PC-9 (cell line): ENCODE measurements at regions of chr19 and their contacts with region 1.

Region 1: DNA sequence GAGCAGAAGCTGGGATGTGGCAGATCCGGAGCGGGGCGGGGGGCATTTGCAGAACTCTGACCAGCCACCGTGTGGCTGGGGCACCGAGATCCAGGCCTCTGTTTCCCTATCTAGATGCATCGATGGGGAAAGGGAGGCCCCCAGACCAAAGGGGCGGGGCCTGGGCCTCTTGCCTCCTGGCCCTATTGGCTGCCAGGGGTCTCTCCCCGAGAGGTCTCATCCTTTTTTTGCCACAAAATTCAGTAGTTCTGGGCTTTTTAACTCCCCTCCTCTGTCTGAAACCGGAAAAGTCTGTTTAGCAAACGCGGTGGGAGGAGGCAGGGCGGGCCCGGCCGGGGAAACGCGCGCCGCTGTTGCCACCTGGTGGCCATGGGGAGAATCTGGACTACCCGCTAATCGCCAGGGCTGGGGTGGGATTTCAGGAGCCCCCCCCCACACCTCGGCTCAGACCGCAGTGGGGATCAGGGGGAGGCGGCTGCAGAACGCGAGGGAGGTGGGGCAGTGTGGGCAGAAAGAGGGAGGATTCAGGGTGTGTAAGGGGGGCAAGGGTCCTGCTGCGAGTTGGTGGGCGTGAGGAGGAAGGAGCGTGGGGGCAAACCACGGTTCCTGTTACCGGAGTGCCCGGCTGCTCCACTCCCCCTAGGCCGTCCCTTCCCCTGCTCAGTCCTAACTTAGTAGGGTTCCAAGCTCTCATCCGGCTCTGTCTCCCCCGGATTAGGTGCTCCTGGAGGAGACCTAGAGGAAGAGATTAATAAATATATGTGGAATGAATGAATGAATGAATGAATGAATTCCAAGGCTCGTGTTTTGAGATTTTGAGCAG is 28.3 kb downstream of the IL12RB1 start:
- DNase-seq: peak; percentile 55 to 77
- H3K4me3 ChIP-seq: no peak overlapping the region
- H3K27ac ChIP-seq: no peak overlapping the region
- H3K4me1 ChIP-seq: no peaks in the 10 kb centered on the region; the same call in 1 of the 2 replicates
- H3K27me3 ChIP-seq: no peaks in the 10 kb centered on the region
- CTCF ChIP-seq: peak; percentile 99

Region 2: DNA sequence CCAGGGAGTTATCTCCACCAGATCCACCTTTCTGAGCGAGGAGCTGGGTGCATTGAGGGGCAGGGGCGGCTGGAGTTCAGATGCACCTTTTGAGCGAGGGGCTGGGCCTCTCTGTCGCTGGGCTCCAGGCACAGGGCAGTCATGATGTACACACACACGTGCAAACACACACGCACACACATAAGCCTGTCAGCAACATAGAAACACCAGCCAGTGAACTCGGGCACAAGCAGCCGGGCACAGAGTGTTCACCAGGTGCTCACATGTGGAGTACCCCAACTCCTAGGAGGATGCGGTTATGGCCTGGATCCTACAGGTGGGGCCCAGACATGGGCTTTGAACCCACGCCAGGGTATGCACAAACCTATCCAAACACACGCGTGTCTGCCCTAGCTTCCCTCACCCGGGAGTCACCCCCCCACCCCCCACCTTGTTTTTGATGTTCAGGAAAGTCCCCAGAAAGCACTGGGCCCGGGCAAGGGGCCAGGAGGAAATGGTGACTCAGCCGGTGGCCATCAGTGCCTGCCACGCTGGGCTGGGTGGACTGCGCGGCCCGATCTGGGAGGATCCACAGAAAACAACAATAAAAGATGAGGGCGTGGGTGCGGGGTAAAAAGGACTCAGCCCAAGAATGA is 37.2 kb before region 1 on chr19:
- CTCF ChIA-PET with region 1: no interaction called
- POLR2A ChIA-PET with region 1: no interaction called
- intact Hi-C with region 1: loop called (anchors 5 kb)
- DNase-seq: peak; percentile 68 to 77
- H3K4me3 ChIP-seq: peak overlapping the region; percentile 56
- H3K27ac ChIP-seq: peak overlapping the region; percentile 83
- H3K4me1 ChIP-seq: peaks cover 19% of the 10 kb centered on the region
- H3K27me3 ChIP-seq: no peaks in the 10 kb centered on the region
- CTCF ChIP-seq: no peak

Region 3: DNA sequence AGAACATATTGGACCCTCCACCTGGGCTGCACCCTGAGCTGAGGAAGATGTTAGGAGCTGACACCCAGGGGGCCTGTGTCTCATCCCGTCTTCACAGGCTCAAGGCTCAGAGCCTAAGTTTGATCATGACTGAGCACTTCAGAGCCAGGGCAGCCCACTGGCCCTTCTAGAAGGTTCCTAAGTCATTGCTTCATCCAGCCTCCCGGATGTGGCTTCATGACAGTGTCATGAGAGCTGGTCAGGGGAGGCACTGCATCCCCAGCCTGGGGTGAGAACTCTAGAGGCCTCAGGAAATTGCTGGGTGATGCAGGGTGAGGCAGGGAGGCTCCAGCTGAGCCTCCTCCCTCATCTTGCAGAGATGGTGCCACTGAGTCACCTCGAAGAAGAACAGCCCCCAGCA is 69.6 kb after region 1 on chr19:
- CTCF ChIA-PET with region 1: no interaction called
- POLR2A ChIA-PET with region 1: no interaction called
- intact Hi-C with region 1: no loop called
- DNase-seq: no peak
- H3K4me3 ChIP-seq: no peak overlapping the region
- H3K27ac ChIP-seq: no peak overlapping the region
- H3K4me1 ChIP-seq: no peaks in the 10 kb centered on the region
- H3K27me3 ChIP-seq: no peaks in the 10 kb centered on the region
- CTCF ChIP-seq: no peak